Activated CD8-positive, alpha-beta memory T cell treated with anti-CD3 and anti-CD28 coated beads, Interleukin-2, amount 10 ng/mL, durations not matched to agents 7 days and 5 days (primary cell): ENCODE measurements at regions of chr9 and their contacts with region 1.

Region 1: GRCh38 chr9:97398999-97399758 is 12.7 kb upstream of the TDRD7 start:
- DNase-seq: peak; percentile 72
- ATAC-seq: no peak
- H3K4me3 Mint-ChIP-seq: no peak overlapping the region
- H3K27ac Mint-ChIP-seq: no peak overlapping the region
- H3K4me1 Mint-ChIP-seq: peaks cover 40% of the 10 kb centered on the region
- H3K27me3 Mint-ChIP-seq: peaks cover 66% of the 10 kb centered on the region

Region 2: DNA sequence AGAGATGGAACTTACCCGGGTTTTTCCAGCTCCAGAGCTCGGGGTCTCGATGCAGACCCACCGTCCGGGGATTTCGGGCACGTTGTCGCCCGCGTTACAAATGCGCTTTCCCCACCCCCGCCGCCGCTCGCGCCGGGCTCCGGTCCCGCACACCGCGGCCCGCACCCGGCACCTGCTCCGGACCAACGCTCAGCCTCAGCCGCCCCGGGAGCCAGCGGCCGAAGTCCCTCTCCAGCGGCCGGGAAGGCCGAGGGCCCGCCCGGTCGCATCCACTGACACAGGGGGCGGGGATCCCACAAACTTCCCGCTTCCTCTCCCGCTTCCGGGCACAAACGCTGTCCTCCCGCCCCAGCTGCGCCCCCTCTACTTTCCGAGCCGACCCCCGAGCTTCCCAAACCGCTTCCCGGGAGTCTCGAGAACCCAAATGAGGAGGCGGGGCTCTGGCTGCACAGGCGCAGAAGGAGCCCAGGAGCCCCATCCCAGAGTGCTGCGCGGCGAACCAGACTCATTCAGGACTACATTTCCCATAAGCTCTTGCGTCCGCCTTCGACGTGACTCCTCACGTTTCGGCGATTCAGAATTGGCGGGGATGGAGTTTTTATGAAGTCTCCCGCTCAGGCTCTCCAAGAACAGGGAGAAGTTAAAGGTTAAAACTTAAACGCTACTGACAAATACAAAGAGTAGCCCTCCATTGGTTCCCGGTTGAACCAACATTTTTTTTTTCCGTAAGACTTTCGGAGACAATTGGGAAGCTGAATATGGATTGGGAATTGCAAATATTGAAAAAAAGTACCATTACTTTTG is 544.9 kb before region 1 on chr9 and contains the start of gene ZNF782:
- CTCF ChIA-PET with region 1: interaction called, 16 read pairs
- DNase-seq: peak; percentile 92
- ATAC-seq: peak; percentile 96
- H3K4me3 Mint-ChIP-seq: peak within 1 kb of the TSS; percentile 98
- H3K27ac Mint-ChIP-seq: peak within 1 kb of the TSS; percentile 97
- H3K4me1 Mint-ChIP-seq: peaks cover 31% of the 10 kb centered on the region
- H3K27me3 Mint-ChIP-seq: peaks cover 23% of the 10 kb centered on the region
- total RNA-seq, gene ZNF782: 4.9 to 5.0 TPM

Region 3: GRCh38 chr9:97386733-97387503 is 12.3 kb before region 1 on chr9:
- CTCF ChIA-PET with region 1: interaction called, 70 read pairs
- DNase-seq: peak; percentile 83
- ATAC-seq: peak; percentile 74
- H3K4me3 Mint-ChIP-seq: no peak overlapping the region
- H3K27ac Mint-ChIP-seq: no peak overlapping the region
- H3K4me1 Mint-ChIP-seq: peaks cover 34% of the 10 kb centered on the region
- H3K27me3 Mint-ChIP-seq: peaks cover 66% of the 10 kb centered on the region

Region 4: DNA sequence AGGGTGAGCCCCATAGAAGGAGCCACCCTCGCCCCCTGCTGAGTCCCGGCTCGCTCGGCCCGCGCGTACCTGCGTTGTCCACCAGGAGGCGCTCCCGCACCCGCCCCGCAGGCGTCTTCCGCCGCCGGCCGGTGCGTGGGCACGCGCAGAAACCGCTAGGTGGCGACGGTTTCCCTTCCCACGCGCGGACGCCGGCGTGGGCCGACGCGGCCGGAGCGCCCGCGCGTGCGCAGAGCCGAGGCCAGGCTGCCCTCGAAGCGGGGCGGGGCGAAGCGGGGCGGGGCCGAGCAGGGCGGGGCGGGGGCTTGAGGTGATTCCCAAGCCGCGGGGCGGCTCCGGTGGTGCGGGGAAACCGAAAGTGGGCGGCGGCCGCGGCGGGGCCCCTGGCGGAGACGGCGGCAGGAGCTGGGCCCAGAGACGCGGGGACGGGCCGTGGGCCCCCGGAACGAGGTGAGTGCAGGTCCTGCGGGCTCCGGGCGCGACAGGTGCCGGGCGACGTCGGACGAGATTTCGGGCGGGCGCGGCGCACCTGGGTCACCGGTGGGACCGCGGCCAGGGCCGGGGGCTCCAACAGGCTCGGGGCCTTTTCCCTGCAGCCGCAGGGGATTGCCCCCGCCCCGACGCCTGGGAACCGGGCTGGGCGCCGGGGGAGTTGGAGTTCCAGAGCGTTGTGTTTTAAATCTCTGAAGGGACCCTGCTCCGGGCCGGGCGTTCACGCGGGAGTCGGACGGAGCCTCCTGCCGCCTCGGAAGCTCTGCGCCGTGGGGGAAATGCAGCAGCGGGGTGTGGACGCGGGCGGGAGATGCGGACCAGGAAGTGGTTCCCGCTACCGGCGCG is 12.8 kb after region 1 on chr9 and contains the start of gene TDRD7:
- CTCF ChIA-PET with region 1: interaction called, 13 read pairs
- DNase-seq: peak; percentile 87
- ATAC-seq: peak; percentile 87
- H3K4me3 Mint-ChIP-seq: peak within 1 kb of the TSS; percentile 76
- H3K27ac Mint-ChIP-seq: peak within 1 kb of the TSS; percentile 64
- H3K4me1 Mint-ChIP-seq: peaks cover 22% of the 10 kb centered on the region
- H3K27me3 Mint-ChIP-seq: peaks cover 41% of the 10 kb centered on the region
- total RNA-seq, gene TDRD7: 10.3 to 15.3 TPM

Region 5: DNA sequence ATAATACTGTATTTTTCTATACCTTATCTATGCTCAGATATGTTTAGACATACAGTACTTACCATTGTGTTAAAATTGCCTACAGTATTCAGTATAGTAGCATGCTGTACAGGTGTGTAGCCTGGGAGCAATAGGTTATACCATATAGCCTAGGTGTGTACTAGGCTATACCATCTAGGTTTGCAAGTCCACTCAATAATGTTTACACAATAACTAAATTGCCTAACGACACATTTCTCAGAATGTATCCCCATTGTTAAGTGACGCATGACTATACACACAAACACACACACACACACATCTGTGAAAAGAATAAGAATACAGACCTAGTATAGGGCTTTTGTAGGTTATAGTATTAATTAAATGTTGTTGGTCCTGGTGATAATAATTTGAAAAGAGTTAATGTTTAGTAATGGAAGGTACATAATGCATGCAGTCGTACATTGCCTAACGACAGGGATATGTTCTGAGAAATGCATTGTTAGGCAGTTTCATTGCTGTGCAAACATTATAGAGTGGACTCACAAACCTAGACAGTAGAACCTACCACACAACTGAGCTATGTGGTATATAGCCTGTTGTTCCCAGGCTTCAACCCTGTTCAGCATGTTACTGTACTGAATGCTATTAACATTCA is 26.3 kb after region 1 on chr9:
- CTCF ChIA-PET with region 1: no interaction called
- DNase-seq: no peak
- ATAC-seq: no peak
- H3K4me3 Mint-ChIP-seq: no peak overlapping the region
- H3K27ac Mint-ChIP-seq: no peak overlapping the region
- H3K4me1 Mint-ChIP-seq: peaks cover 1% of the 10 kb centered on the region
- H3K27me3 Mint-ChIP-seq: no peaks in the 10 kb centered on the region